Panc1 (cell line): ENCODE measurements at regions of chr5 and their contacts with region 1.

Region 1: GRCh38 chr5:134500699-134501354 is 24.6 kb upstream of the JADE2 start:
- DNase-seq: no peak
- ATAC-seq: no peak
- H3K4me3 ChIP-seq: no peak overlapping the region
- H3K27ac ChIP-seq: no peak overlapping the region
- H3K4me1 ChIP-seq: peaks cover 31% of the 10 kb centered on the region
- H3K27me3 ChIP-seq: no peaks in the 10 kb centered on the region
- CTCF ChIP-seq: no peak

Region 2: DNA sequence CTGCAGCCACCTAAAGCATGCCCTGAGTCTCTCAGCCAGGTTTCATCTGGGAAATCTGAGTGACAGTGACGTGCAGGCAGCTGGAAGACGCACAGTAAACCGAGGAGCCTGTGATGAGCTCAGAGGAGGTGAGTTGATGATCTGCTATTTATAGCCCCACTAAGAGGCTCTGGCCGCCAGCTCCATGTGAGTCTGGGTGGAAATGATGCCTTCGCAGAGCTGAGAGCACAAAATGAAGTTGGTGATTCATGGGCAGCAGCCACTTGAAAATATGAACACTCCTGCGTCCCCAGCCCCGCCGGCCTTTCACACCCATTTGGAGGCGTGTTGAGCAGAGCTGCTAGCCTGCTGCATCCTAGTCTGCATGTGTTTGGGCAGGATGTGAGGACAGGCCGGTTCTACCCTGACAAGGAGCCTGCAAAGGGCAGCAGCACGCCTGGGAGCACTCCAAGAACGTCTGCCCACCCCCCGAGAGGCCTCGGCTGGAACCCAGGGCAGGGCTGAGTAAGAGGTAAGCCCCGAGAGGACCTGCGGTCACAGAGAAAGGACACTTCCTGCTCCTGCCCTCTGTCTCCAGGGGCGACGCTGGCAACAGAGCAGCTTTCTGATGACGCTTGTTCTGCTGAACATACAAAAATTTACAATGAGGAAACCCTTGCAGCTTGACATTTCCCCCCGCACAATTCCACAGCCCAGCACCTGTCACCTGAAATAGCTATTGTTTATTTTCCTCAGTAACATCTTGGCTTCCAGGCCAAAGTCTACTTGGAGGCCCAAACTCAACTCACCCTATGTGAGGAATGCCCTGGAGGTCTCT is 64.1 kb before region 1 on chr5:
- CTCF ChIA-PET with region 1: no interaction called
- POLR2A ChIA-PET with region 1: no interaction called
- in situ Hi-C with region 1: no loop called
- intact Hi-C with region 1: no loop called
- DNase-seq: no peak
- ATAC-seq: peak; percentile 78
- H3K4me3 ChIP-seq: peak overlapping the region in 1 of 2 experiments; percentile 32; a peak in 1 of 4 replicates
- H3K27ac ChIP-seq: peak overlapping the region; percentile 48
- H3K4me1 ChIP-seq: peaks cover 29% of the 10 kb centered on the region
- H3K27me3 ChIP-seq: no peaks in the 10 kb centered on the region
- CTCF ChIP-seq: no peak

Region 3: GRCh38 chr5:134479839-134480238 is 21.0 kb before region 1 on chr5:
- CTCF ChIA-PET with region 1: no interaction called
- POLR2A ChIA-PET with region 1: interaction called, 11 read pairs
- in situ Hi-C with region 1: no loop called
- intact Hi-C with region 1: no loop called
- DNase-seq: no peak
- ATAC-seq: no peak
- H3K4me3 ChIP-seq: no peak overlapping the region
- H3K27ac ChIP-seq: no peak overlapping the region
- H3K4me1 ChIP-seq: no peaks in the 10 kb centered on the region
- H3K27me3 ChIP-seq: no peaks in the 10 kb centered on the region
- CTCF ChIP-seq: no peak

Region 4: DNA sequence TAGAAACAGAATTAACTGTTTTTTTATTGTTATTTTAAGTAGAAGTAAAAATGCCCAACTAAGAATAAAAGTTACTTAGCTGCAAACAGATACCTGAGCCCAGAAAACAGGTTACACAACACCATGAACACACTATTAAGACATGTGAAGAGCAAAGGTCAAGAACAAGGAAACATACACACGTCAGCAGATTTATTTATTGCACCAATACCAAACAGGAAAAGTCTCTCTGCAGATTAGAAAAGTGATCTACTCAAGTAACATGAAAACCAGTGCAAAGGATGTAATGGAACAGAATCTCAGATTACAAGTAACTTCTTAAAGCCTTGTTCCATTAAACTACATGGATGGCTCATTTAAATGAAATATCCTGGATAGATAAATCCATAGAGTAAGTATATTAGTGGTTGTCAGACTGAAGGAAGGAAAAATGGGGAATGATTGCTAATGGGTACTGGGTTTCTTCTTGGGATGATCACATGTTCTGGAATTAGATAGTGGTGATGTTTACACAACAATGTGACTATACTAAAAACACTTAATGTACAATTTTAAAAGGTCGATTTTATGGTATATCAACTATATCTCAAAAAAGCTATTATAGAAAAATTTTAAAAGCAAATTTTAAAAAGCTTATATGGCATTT is 125.7 kb after region 1 on chr5:
- CTCF ChIA-PET with region 1: no interaction called
- POLR2A ChIA-PET with region 1: no interaction called
- in situ Hi-C with region 1: no loop called
- intact Hi-C with region 1: no loop called
- DNase-seq: no peak
- ATAC-seq: no peak
- H3K4me3 ChIP-seq: no peak overlapping the region
- H3K27ac ChIP-seq: no peak overlapping the region
- H3K4me1 ChIP-seq: no peaks in the 10 kb centered on the region
- H3K27me3 ChIP-seq: no peaks in the 10 kb centered on the region
- CTCF ChIP-seq: no peak